ENCODE measurements at regions of chr3 and their contacts with region 1.

Region 1: DNA sequence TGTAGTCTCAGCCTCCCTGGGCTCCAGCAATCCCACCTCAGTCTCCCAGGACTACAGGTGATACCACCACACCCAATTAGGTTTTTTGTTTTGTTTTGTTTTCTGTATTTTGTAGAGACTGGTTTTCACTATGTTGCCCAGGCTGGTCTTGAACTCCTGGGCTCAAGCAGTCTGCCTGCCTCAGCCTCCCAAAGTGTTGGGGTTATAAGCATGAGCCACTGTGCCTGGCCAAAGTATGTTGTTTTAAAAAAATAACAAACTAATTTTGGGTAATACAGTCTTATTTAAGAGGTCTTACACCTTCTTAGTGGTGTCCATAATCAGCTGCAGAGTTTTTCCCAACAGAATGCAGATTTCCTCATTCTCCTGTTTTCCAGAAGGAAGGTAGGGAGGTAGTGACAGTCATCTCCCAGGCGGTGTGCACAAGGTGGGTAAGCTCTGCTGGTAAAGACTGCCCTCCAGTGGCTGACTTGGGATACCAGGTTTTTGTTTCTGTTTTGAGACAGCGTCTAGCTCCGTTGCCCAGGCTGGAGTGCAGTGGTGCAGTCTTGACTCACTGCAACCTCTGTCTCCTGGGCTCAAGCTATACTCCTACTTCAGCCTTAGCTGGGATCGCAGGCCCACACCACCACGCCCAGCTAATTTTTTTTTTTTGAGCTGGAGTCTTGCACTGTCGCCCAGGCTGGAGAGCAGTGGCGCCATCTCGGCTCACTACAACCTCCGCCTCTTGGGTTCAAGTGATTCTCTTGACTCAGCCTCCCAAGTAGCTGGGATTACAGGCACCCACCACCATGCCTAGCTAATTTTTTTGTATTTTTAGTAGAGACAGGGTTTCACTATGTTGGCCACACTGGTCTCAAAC is 58.4 kb downstream of the MAP6D1 start:
- DNase-seq: peak; percentile 63 to 79 (median 71)
- H3K4me3 ChIP-seq: no peak overlapping the region
- H3K27ac ChIP-seq: no peak overlapping the region
- H3K4me1 ChIP-seq: no peaks in the 10 kb centered on the region
- H3K27me3 ChIP-seq: no peaks in the 10 kb centered on the region
- CTCF ChIP-seq: peak; percentile 60 to 76 (median 70)
- EP300 ChIP-seq: no peak
- POLR2A ChIP-seq: no peak

Region 2: GRCh38 chr3:183468424-183468823 is 298.6 kb before region 1 on chr3:
- intact Hi-C with region 1: loop called (anchors 2 to 10 kb)
- DNase-seq: no peak
- H3K4me3 ChIP-seq: no peak overlapping the region
- H3K27ac ChIP-seq: no peak overlapping the region
- H3K4me1 ChIP-seq: no peaks in the 10 kb centered on the region
- H3K27me3 ChIP-seq: no peaks in the 10 kb centered on the region
- CTCF ChIP-seq: no peak
- EP300 ChIP-seq: no peak
- POLR2A ChIP-seq: no peak

Region 3: DNA sequence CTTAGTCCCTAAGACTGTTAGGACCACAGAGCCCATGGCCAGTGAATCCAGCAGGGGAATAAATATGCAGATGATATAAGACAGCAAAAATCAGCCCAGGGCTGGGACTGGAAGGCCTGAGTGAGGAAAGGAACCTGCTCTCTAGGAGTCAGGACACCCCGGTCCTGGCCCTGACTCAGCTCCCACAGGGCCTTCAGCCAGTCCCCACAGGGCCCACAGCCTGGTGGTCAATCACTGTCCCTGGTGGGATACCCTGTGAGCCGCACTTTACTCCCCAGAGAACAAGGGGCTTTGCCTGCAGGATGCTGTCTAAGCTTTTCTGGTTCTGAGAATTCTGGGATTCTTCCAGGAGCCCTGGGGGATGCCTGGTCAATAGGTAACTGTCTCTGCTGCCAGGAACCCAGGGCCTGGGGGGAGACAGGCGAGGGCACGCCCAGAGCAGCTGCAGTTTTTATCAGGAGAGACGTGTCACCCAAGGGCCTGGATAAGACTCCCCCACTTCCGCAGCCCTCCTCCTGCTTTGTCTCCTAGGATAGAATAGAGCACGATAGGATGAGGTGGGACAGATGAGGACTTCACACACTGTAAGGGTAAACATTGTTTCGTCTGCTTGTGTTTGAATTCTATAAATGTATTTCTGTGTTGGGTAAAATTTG is 289.0 kb before region 1 on chr3:
- intact Hi-C with region 1: loop called in 2 of 4 experiments (anchors 5 to 10 kb)
- DNase-seq: no peak
- H3K4me3 ChIP-seq: no peak overlapping the region
- H3K27ac ChIP-seq: no peak overlapping the region
- H3K4me1 ChIP-seq: no peaks in the 10 kb centered on the region
- H3K27me3 ChIP-seq: no peaks in the 10 kb centered on the region
- CTCF ChIP-seq: no peak
- EP300 ChIP-seq: no peak
- POLR2A ChIP-seq: no peak

Region 4: GRCh38 chr3:183812761-183813445 is 45.9 kb after region 1 on chr3:
- intact Hi-C with region 1: no loop called
- DNase-seq: no peak
- H3K4me3 ChIP-seq: no peak overlapping the region
- H3K27ac ChIP-seq: no peak overlapping the region
- H3K4me1 ChIP-seq: no peaks in the 10 kb centered on the region
- H3K27me3 ChIP-seq: no peaks in the 10 kb centered on the region
- CTCF ChIP-seq: no peak
- EP300 ChIP-seq: no peak
- POLR2A ChIP-seq: no peak

Measured in ovary (tissue), 10 donors.